Breast epithelium (tissue), 4 donors: ENCODE measurements at regions of chr1 and their contacts with region 1.

Region 1: GRCh38 chr1:239587066-239587465 is 200.7 kb downstream of the CHRM3 start:
- DNase-seq: no peak
- H3K4me3 ChIP-seq: no peak overlapping the region
- H3K27ac ChIP-seq: no peak overlapping the region
- H3K4me1 ChIP-seq: no peaks in the 10 kb centered on the region
- H3K27me3 ChIP-seq: no peaks in the 10 kb centered on the region
- CTCF ChIP-seq: no peak
- POLR2A ChIP-seq: no peak

Region 2: GRCh38 chr1:238485057-238485911 is 1101.8 kb before region 1 on chr1:
- intact Hi-C with region 1: loop called (anchors 5 kb)
- DNase-seq: no peak
- H3K4me3 ChIP-seq: peak overlapping the region in 2 of 3 donors; percentile 16 to 35
- H3K27ac ChIP-seq: no peak overlapping the region
- H3K4me1 ChIP-seq: no peaks in the 10 kb centered on the region
- H3K27me3 ChIP-seq: no peaks in the 10 kb centered on the region
- CTCF ChIP-seq: no peak
- POLR2A ChIP-seq: no peak

Region 3: DNA sequence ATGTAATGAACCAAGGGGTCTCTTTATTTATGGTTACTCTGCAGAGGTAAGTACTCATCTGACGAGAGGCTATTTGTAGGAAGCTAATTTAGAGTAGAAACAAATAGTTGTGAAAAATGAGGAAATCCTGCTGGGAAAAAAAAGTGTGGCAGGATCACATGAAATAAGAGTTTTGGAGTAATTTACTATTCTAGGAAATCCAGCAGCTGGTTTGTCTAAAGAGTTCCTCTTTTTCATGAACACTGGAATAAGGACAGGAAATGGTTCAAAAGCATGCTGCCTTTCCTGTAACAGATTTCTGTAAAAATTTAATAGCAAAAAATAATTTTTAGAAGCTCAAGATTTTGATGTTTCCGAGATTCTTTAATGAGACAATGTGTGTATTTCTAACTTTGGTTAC is 23.4 kb before region 1 on chr1:
- intact Hi-C with region 1: no loop called
- DNase-seq: no peak
- H3K4me3 ChIP-seq: no peak overlapping the region
- H3K27ac ChIP-seq: no peak overlapping the region
- H3K4me1 ChIP-seq: no peaks in the 10 kb centered on the region
- H3K27me3 ChIP-seq: no peaks in the 10 kb centered on the region
- CTCF ChIP-seq: no peak
- POLR2A ChIP-seq: no peak